ENCODE measurements at regions of chrX and their contacts with region 1.

Region 1: DNA sequence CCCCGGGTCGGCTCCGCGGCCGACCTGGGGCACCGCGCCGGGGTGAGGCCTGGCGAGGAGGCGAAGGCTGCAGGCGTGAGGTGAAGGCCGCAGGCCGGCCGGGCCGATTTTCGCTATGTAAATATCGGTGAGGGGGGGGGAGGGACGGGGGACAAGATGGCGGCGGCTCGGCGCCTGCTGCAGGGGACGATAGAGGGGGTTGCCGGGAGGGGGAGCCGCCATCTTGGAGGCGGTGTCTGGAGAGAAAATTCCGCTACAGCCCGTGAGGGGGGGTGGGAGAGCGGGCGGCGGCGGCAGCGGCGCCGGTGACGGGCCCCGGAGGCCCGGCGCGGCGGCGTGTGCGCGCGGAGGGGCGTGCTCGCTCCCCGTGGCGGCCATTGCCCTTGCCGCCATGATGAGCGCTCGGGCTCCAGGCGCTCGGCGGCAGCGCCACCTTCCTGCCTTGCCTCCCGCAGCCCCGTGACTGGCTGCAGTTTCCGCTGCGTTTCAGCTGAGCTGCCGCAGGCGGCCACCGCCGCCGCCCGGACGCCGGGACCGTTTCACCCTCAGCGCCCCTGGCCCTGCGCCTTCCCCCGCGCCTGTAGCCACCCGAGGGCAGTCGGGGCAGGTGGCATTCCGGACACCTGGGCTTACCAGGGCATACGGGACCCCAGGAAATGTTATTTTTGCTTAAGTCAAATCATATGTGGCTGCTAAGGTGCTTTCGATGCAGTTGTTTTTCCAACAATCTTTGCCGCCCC is 692 bp downstream of the ZFX start:
- DNase-seq: peak; percentile 90
- H3K4me3 Mint-ChIP-seq: peak overlapping the region; percentile 92
- H3K27ac Mint-ChIP-seq: peak overlapping the region; percentile 97
- H3K4me1 Mint-ChIP-seq: peaks cover 50% of the 10 kb centered on the region
- H3K27me3 Mint-ChIP-seq: no peaks in the 10 kb centered on the region
- CTCF ChIP-seq: peak; percentile 49

Region 2: GRCh38 chrX:24081661-24082264 is 68.5 kb before region 1 on chrX:
- CTCF ChIA-PET with region 1: interaction called, 6 read pairs
- intact Hi-C with region 1: loop called (anchors 1 kb)
- DNase-seq: peak; percentile 77
- H3K4me3 Mint-ChIP-seq: no peak overlapping the region
- H3K27ac Mint-ChIP-seq: no peak overlapping the region
- H3K4me1 Mint-ChIP-seq: no peaks in the 10 kb centered on the region
- H3K27me3 Mint-ChIP-seq: no peaks in the 10 kb centered on the region
- CTCF ChIP-seq: no peak

Region 3: GRCh38 chrX:24186483-24186882 is 36.3 kb after region 1 on chrX:
- CTCF ChIA-PET with region 1: no interaction called
- intact Hi-C with region 1: loop called (anchors 5 kb)
- DNase-seq: no peak
- H3K4me3 Mint-ChIP-seq: no peak overlapping the region
- H3K27ac Mint-ChIP-seq: no peak overlapping the region
- H3K4me1 Mint-ChIP-seq: peaks cover 23% of the 10 kb centered on the region
- H3K27me3 Mint-ChIP-seq: no peaks in the 10 kb centered on the region
- CTCF ChIP-seq: no peak

Region 4: GRCh38 chrX:24553011-24553410 is 402.8 kb after region 1 on chrX:
- CTCF ChIA-PET with region 1: no interaction called
- intact Hi-C with region 1: no loop called
- DNase-seq: no peak
- H3K4me3 Mint-ChIP-seq: no peak overlapping the region
- H3K27ac Mint-ChIP-seq: no peak overlapping the region
- H3K4me1 Mint-ChIP-seq: no peaks in the 10 kb centered on the region
- H3K27me3 Mint-ChIP-seq: no peaks in the 10 kb centered on the region
- CTCF ChIP-seq: no peak